ENCODE measurements at regions of chr14 and their contacts with region 1.

Region 1: GRCh38 chr14:34355584-34356263 is 106.3 kb downstream of the SPTSSA start:
- DNase-seq: no peak
- H3K4me3 ChIP-seq: no peak overlapping the region
- H3K27ac ChIP-seq: no peak overlapping the region
- H3K4me1 ChIP-seq: no peaks in the 10 kb centered on the region
- H3K27me3 ChIP-seq: no peaks in the 10 kb centered on the region
- CTCF ChIP-seq: no peak

Region 2: GRCh38 chr14:34340025-34340625 is 15.6 kb before region 1 on chr14:
- CTCF ChIA-PET with region 1: no interaction called
- POLR2A ChIA-PET with region 1: no interaction called
- intact Hi-C with region 1: no loop called
- DNase-seq: no peak
- H3K4me3 ChIP-seq: no peak overlapping the region
- H3K27ac ChIP-seq: no peak overlapping the region
- H3K4me1 ChIP-seq: no peaks in the 10 kb centered on the region
- H3K27me3 ChIP-seq: no peaks in the 10 kb centered on the region
- CTCF ChIP-seq: no peak

Region 3: DNA sequence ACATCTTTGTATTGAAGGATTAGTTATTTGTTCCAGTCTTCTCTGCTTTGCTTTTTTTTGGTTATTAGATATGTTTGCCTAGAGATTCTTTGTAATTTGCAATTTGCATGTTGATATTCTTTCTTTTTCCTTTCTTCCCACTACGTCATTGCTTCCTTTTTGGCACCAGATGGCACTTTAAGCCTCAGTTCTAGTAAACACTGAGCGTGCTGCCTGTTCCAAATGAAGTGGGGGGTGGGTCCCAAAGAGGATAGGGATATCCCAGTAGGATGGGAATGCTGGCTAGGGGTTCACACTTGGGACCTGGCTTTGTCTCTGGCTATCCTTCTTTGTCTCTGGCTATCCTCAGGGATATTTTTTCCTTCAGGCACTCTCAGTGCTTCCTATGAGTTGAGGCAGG is 166.8 kb after region 1 on chr14:
- CTCF ChIA-PET with region 1: no interaction called
- POLR2A ChIA-PET with region 1: interaction called, 13 read pairs
- intact Hi-C with region 1: no loop called
- DNase-seq: no peak
- H3K4me3 ChIP-seq: no peak overlapping the region
- H3K27ac ChIP-seq: no peak overlapping the region
- H3K4me1 ChIP-seq: no peaks in the 10 kb centered on the region
- H3K27me3 ChIP-seq: no peaks in the 10 kb centered on the region
- CTCF ChIP-seq: no peak

Measured in A673 (cell line).